Motor neuron (in vitro differentiated cells): ENCODE measurements at regions of chr19 and their contacts with region 1.

Region 1: GRCh38 chr19:33785795-33786194 is 10.9 kb upstream of the KCTD15 start:
- ATAC-seq: peak in 3 of 8 experiments; percentile 87 to 93 (median 90)
- H3K4me3 ChIP-seq: no peak overlapping the region
- H3K27ac ChIP-seq: no peak overlapping the region
- H3K4me1 ChIP-seq: peaks cover 0 to 12% of the 10 kb centered on the region in 2 donors

Region 2: DNA sequence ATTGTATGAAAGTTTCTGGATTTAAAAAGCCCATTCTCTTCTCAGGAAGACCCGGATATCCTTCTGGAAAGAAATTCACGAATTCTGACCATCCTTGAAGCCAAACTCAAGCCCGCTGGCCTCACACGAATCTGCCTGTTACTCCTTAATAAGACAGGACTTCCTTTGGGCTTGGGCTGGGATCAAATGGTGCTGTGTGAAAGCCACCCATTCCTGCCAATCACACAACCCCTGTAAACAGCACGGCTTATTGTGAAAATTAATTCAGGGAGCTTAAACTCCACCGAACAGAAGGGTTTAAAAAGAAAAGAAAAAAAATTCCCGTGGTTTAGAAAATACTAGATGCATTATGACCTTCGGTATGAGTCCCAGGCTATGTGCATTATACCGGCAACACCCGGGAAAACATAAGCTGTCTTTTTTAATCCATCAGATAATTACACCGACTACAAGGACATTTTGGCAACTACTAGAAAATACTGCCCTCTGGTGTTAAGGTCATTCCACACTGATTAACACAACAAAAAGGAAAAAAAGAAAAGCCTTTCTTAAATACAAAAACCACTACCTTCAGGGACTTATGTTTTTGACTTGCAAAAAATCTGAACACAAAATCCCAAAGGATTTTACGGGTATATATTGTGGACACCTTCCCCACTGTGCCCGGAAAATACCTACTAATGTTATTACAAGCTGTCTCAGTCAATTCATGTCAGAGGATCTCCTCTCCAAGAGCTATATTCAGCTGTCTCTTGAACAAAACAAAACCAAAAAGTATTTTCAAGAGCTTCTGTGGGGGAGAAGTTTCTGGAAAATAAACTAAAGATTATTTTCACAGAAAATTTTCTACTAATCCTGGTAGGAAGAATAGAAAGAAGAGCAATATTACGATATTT is 310.5 kb after region 1 on chr19:
- in situ Hi-C with region 1: loop called in 8 of 9 experiments (anchors 5 to 25 kb)
- ATAC-seq: peak; percentile 66 to 96 (median 79)
- H3K4me3 ChIP-seq: no peak overlapping the region
- H3K27ac ChIP-seq: no peak overlapping the region
- H3K4me1 ChIP-seq: peaks cover 0 to 4% of the 10 kb centered on the region in 2 donors